PC-9 (cell line): ENCODE measurements at regions of chr20 and their contacts with region 1.

Region 1: GRCh38 chr20:51220293-51220706 is 197.4 kb upstream of the KCNG1 start:
- DNase-seq: peak in 1 of 2 experiments; percentile 33
- H3K4me3 ChIP-seq: no peak overlapping the region
- H3K27ac ChIP-seq: no peak overlapping the region
- H3K4me1 ChIP-seq: peaks cover 14% of the 10 kb centered on the region
- H3K27me3 ChIP-seq: peaks cover 10% of the 10 kb centered on the region; the same call in 1 of the 2 replicates
- CTCF ChIP-seq: peak; percentile 86

Region 2: DNA sequence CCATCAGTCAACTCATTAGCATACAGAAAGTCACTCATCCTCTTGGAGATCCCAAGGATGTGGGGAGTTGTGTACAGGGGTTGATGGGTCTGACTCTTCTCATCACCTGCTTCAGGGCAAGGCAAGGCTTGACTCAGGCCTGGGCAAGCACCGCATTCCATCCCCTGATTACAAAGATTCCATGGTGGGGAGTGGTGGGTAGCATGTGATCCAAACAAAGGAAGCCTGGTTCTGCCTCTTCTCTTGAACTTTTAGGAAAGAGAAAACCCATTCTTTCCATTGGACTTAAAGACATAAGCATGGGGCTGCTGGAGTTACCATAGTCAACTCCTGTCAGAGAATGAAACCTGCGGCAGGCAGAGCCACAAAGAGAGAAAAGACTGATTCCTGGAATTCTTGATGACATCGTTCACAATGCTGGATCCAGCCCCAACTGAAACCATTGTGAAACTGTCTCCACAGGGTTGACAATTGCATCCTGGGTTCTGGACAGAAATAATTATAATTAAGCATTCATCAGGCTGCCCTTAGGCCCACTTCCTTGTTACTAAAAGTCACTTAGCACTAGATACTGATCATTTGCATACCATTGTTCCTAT is 38.4 kb after region 1 on chr20:
- CTCF ChIA-PET with region 1: no interaction called
- POLR2A ChIA-PET with region 1: no interaction called
- intact Hi-C with region 1: loop called (anchors 1 kb)
- DNase-seq: peak; percentile 41 to 66
- H3K4me3 ChIP-seq: no peak overlapping the region
- H3K27ac ChIP-seq: peak overlapping the region; percentile 43
- H3K4me1 ChIP-seq: peaks cover 28% of the 10 kb centered on the region
- H3K27me3 ChIP-seq: peaks cover 51% of the 10 kb centered on the region
- CTCF ChIP-seq: no peak

Region 3: GRCh38 chr20:51306503-51307358 is 86.4 kb after region 1 on chr20:
- CTCF ChIA-PET with region 1: no interaction called
- POLR2A ChIA-PET with region 1: no interaction called
- intact Hi-C with region 1: loop called (anchors 2 kb)
- DNase-seq: peak in 1 of 2 experiments; percentile 76
- H3K4me3 ChIP-seq: no peak overlapping the region
- H3K27ac ChIP-seq: no peak overlapping the region
- H3K4me1 ChIP-seq: peaks cover 16% of the 10 kb centered on the region
- H3K27me3 ChIP-seq: peaks cover 6% of the 10 kb centered on the region; the same call in 1 of the 2 replicates
- CTCF ChIP-seq: peak; percentile 97